GM18951 (cell line): ENCODE measurements at regions of chr4 and their contacts with region 1.

Region 1: DNA sequence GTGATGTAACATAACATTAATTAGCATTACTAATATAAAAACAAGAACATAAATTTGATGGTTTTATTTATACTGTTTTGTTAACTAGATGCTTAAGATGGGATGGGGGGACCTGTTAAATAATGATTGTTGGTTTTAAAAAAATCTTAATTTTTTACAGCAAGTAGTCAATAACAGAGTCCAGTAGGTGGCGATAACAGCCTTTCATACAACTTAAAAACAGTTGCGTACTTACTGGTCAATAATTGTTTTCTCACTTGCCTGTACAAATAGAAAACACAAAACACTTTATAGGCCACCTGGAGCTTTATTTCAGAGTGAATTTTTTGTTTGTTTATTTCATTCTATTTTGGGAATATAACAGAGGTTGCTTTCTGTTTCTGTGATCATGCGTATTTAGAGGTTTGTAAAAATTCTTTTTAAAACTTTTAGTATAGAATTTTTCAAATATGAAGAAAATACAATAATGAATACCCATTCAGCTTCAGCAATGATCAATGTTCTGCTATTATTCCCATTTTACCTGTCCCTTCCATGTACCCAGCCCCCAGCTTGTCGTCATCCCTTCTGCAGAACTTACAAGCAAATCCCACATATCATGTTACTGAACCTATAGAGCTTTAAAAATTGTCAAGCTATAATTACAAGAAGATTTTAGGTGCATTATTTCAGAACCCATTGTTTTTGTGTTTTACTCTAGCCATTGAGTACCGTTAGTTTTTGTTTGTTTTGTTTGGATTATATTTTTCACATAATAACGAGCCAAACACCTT is 97.1 kb downstream of the MRPL1 start:
- POLR2A ChIP-seq: no peak

Region 2: DNA sequence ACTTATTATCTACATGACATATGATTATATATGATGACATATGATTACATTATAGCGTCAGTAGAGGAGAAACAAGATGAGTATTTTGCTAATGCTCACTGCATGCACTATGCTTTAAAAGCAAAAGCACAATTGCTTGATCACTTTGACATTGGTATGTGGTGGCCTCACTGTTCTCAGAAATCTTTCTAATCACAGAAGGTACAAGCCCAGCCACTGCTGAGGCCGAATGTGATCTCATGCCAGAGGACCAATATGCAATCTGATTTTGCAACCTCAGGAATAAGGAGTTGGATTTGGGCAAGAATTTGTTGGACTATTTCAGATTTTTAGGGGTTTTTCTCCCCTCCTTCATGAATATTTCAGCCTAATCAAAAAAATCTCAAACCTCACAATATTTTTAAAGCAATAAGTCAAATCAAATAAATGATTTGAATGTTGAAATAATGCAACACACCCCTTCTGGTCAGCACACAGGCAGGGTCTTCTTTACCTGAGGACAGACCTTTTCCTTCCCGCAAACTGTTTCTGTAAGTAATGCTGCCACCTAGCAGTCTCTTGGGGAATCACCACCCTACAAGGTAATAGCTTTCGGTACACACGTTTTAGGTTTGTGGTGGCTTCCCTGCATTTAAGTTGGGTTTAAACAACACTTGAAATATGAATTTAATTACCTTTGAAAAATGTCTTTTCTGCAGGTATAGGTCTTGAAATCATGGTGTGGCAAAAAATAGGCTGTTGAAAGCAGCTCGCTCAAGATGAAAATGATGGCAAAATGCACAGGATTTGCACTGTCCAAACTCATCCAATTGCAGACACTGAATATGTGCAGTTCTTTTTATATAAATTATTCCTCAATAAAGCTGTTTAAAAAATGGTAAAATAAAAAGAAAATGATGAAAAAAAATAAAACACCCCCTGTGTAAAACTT is 359.0 kb before region 1 on chr4:
- in situ Hi-C with region 1: no loop called
- POLR2A ChIP-seq: no peak

Region 3: DNA sequence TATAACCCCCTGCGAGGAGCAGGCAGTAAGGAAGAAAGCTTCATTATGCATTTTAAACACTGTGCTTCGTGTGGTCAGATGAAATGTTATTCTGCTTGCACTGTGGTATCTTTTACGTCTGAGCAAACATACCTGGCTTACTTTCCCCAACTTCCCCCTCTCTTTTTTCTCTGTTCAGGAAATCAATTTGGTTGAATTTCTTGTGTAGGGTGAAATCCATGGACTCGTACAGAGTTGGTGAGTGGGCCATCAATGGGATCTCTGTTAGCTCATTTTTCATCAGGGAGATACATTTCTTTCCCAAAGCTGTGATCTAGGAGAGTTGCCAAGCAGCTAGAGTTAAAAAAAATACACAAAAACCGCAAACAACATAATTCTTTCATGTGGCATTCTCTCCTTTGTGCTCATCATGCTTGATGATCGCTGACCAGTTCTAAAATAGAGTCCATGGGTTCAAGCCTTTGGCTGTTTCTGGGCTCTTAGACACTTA is 195.9 kb after region 1 on chr4:
- in situ Hi-C with region 1: no loop called
- POLR2A ChIP-seq: no peak

Region 4: DNA sequence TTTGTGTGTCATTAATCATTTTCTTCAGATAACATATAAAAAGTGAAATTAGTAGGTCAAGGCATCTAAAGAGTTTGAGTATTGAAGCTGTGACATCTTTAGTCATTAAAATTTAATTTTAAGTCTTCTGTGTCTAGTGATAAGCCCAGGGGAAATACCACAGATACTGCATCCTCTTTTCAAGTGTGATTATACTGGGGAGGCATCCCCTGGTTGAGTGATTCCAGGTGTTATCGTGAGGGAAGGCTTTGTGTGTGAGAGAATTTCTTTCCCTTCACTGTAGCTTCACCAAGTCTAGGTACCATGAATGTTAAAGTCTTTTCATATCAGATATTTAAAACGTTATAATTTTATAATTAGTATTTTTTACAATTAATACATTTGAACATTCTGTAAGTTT is 290.7 kb after region 1 on chr4:
- in situ Hi-C with region 1: no loop called
- POLR2A ChIP-seq: no peak

Region 5: GRCh38 chr4:78410676-78411075 is 450.9 kb after region 1 on chr4:
- in situ Hi-C with region 1: no loop called
- POLR2A ChIP-seq: no peak

Region 6: DNA sequence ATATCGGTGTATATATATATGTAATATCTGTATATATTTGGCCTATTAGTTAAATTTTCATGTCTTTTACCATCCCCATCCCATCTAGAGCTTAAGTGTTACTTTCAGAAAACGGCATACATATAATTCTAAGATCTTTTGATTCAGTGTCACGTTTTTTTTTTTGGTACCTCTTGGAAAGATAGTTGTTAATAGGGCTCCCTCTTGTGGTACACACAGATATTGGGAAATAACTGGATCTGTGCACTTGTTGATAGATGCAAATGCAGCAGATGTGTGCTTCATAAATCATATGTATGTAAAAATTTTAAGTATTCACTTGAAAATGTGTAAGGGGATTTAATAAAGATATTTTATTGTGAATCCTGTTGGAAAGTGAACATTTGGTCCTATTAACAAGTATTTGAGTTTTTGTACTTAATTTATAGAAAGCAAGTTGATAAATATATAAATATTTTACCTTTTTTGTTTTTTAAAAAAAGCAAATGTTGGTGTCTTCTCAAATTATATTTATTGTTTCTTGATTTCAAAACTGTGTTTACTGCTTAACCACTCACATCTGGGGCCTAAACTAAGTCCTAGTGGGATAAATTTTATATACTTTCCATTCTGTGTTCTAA is 904.8 kb after region 1 on chr4:
- in situ Hi-C with region 1: loop called (anchors 25 kb)
- POLR2A ChIP-seq: no peak